Caco-2 (cell line): ENCODE measurements at regions of chr3 and their contacts with region 1.

Region 1: DNA sequence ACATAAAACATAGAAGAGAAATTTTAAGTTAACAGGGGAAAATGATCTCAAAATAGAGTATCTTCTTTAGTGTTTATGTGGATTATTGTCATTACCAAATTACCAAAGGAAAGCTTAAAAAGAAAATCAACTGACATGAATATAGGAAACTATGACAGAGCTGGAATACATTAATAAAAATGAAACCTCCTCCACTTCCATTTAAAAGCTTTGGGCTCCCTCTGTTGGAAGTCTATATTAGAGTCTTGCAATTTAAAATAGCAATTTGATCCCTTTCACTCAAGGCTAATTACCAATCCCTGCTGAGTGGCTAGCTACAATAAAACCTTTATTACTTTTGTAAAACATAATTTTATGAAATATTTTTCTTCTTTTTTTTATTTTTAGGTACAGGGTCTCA is 61.4 kb upstream of the IMPG2 start:
- DNase-seq: peak in 1 of 2 experiments; percentile 16
- H3K4me3 ChIP-seq: no peak overlapping the region
- H3K4me3 Mint-ChIP-seq: no peak overlapping the region
- H3K27ac Mint-ChIP-seq: no peak overlapping the region
- H3K4me1 ChIP-seq: peaks cover 13% of the 10 kb centered on the region
- H3K4me1 Mint-ChIP-seq: peaks cover 14% of the 10 kb centered on the region
- H3K27me3 ChIP-seq: no peaks in the 10 kb centered on the region
- H3K27me3 Mint-ChIP-seq: no peaks in the 10 kb centered on the region
- CTCF ChIP-seq: peak; percentile 24 to 31

Region 2: GRCh38 chr3:100737334-100737733 is 644.5 kb before region 1 on chr3:
- CTCF ChIA-PET with region 1: no interaction called
- POLR2A ChIA-PET with region 1: no interaction called
- intact Hi-C with region 1: loop called (anchors 10 kb)
- DNase-seq: peak in 1 of 2 experiments; percentile 12
- H3K4me3 ChIP-seq: no peak overlapping the region
- H3K4me3 Mint-ChIP-seq: no peak overlapping the region
- H3K27ac Mint-ChIP-seq: no peak overlapping the region
- H3K4me1 ChIP-seq: peaks cover 5% of the 10 kb centered on the region; the same call in 1 of the 2 replicates
- H3K4me1 Mint-ChIP-seq: peaks cover 28% of the 10 kb centered on the region
- H3K27me3 ChIP-seq: no peaks in the 10 kb centered on the region
- H3K27me3 Mint-ChIP-seq: no peaks in the 10 kb centered on the region
- CTCF ChIP-seq: peak; percentile 8 to 12

Region 3: GRCh38 chr3:100825574-100825973 is 556.2 kb before region 1 on chr3:
- CTCF ChIA-PET with region 1: no interaction called
- POLR2A ChIA-PET with region 1: no interaction called
- intact Hi-C with region 1: loop called (anchors 5 kb)
- DNase-seq: no peak
- H3K4me3 ChIP-seq: no peak overlapping the region
- H3K4me3 Mint-ChIP-seq: no peak overlapping the region
- H3K27ac Mint-ChIP-seq: no peak overlapping the region
- H3K4me1 ChIP-seq: no peaks in the 10 kb centered on the region
- H3K4me1 Mint-ChIP-seq: no peaks in the 10 kb centered on the region
- H3K27me3 ChIP-seq: no peaks in the 10 kb centered on the region; the same call in 1 of the 2 replicates
- H3K27me3 Mint-ChIP-seq: peaks cover 8% of the 10 kb centered on the region
- CTCF ChIP-seq: no peak

Region 4: GRCh38 chr3:101069901-101070798 is 311.7 kb before region 1 on chr3:
- CTCF ChIA-PET with region 1: no interaction called
- POLR2A ChIA-PET with region 1: no interaction called
- intact Hi-C with region 1: loop called (anchors 1 kb)
- DNase-seq: peak; percentile 81 to 85
- H3K4me3 ChIP-seq: no peak overlapping the region
- H3K4me3 Mint-ChIP-seq: peak overlapping the region; percentile 8
- H3K27ac Mint-ChIP-seq: peak overlapping the region; percentile 74
- H3K4me1 ChIP-seq: peaks cover 8% of the 10 kb centered on the region
- H3K4me1 Mint-ChIP-seq: peaks cover 32% of the 10 kb centered on the region
- H3K27me3 ChIP-seq: no peaks in the 10 kb centered on the region
- H3K27me3 Mint-ChIP-seq: no peaks in the 10 kb centered on the region
- CTCF ChIP-seq: peak; percentile 80 to 86

Region 5: GRCh38 chr3:101229681-101230080 is 152.1 kb before region 1 on chr3:
- CTCF ChIA-PET with region 1: no interaction called
- POLR2A ChIA-PET with region 1: no interaction called
- intact Hi-C with region 1: loop called (anchors 1 kb)
- DNase-seq: no peak
- H3K4me3 ChIP-seq: no peak overlapping the region
- H3K4me3 Mint-ChIP-seq: no peak overlapping the region
- H3K27ac Mint-ChIP-seq: no peak overlapping the region
- H3K4me1 ChIP-seq: no peaks in the 10 kb centered on the region
- H3K4me1 Mint-ChIP-seq: no peaks in the 10 kb centered on the region
- H3K27me3 ChIP-seq: no peaks in the 10 kb centered on the region
- H3K27me3 Mint-ChIP-seq: peaks cover 17% of the 10 kb centered on the region
- CTCF ChIP-seq: no peak

Region 6: DNA sequence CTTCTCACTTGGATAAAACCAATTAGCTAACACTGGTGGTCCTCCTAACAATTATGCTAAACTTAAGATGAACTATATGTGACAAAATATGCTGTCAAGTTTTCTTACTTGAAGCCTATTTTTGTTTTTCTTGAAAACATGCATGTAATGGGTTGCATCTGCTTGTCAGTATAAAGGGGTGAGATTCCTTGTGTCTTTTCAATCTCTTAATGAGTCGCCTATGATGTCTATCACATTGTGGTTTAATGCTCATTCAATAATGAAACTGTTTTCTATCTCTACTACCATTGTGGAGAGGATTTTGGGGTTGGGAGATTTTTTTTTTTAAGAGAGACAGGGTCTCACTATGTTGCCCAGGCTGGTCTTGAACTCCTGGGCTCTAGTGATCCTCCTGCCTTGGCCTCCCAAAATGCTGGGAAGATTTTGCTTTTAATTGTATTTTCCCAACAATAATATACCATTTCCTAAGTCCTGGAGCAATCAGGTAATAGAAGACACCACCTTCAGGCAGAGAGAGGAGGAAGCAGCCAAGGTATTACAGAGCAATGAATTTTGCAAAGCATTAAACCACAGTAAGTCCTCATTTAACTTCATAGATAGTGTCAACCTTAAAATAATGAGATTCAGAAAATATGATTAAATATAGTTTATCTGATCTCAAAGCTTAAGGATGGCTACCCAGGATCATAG is 162.5 kb after region 1 on chr3:
- CTCF ChIA-PET with region 1: no interaction called
- POLR2A ChIA-PET with region 1: no interaction called
- intact Hi-C with region 1: loop called (anchors 10 kb)
- DNase-seq: no peak
- H3K4me3 ChIP-seq: no peak overlapping the region
- H3K4me3 Mint-ChIP-seq: no peak overlapping the region
- H3K27ac Mint-ChIP-seq: no peak overlapping the region
- H3K4me1 ChIP-seq: peaks cover 12% of the 10 kb centered on the region
- H3K4me1 Mint-ChIP-seq: peaks cover 15% of the 10 kb centered on the region
- H3K27me3 ChIP-seq: no peaks in the 10 kb centered on the region
- H3K27me3 Mint-ChIP-seq: no peaks in the 10 kb centered on the region
- CTCF ChIP-seq: peak in 1 of 2 experiments; percentile 4

Region 7: GRCh38 chr3:101602731-101603130 is 220.9 kb after region 1 on chr3:
- CTCF ChIA-PET with region 1: no interaction called
- POLR2A ChIA-PET with region 1: no interaction called
- intact Hi-C with region 1: no loop called
- DNase-seq: no peak
- H3K4me3 ChIP-seq: no peak overlapping the region
- H3K4me3 Mint-ChIP-seq: no peak overlapping the region
- H3K27ac Mint-ChIP-seq: no peak overlapping the region
- H3K4me1 ChIP-seq: no peaks in the 10 kb centered on the region
- H3K4me1 Mint-ChIP-seq: no peaks in the 10 kb centered on the region
- H3K27me3 ChIP-seq: no peaks in the 10 kb centered on the region
- H3K27me3 Mint-ChIP-seq: no peaks in the 10 kb centered on the region
- CTCF ChIP-seq: no peak